ENCODE measurements at regions of chr7 and their contacts with region 1.

Region 1: GRCh38 chr7:3592401-3593135 is 291.5 kb downstream of the SDK1 start:
- DNase-seq: peak; percentile 41
- ATAC-seq: peak; percentile 92
- H3K4me3 ChIP-seq: peak overlapping the region; percentile 34 to 60
- H3K27ac ChIP-seq: peak overlapping the region; percentile 98
- H3K4me1 ChIP-seq: peaks cover 57% of the 10 kb centered on the region
- H3K27me3 ChIP-seq: no peaks in the 10 kb centered on the region
- CTCF ChIP-seq: peak; percentile 74

Region 2: GRCh38 chr7:3056234-3057065 is 536.1 kb before region 1 on chr7:
- CTCF ChIA-PET with region 1: no interaction called
- POLR2A ChIA-PET with region 1: no interaction called
- in situ Hi-C with region 1: no loop called
- intact Hi-C with region 1: no loop called
- DNase-seq: no peak
- ATAC-seq: no peak
- H3K4me3 ChIP-seq: no peak overlapping the region
- H3K27ac ChIP-seq: no peak overlapping the region
- H3K4me1 ChIP-seq: peaks cover 4% of the 10 kb centered on the region; the same call in 1 of the 2 replicates
- H3K27me3 ChIP-seq: peaks cover 3% of the 10 kb centered on the region; the same call in 1 of the 2 replicates
- CTCF ChIP-seq: no peak

Region 3: DNA sequence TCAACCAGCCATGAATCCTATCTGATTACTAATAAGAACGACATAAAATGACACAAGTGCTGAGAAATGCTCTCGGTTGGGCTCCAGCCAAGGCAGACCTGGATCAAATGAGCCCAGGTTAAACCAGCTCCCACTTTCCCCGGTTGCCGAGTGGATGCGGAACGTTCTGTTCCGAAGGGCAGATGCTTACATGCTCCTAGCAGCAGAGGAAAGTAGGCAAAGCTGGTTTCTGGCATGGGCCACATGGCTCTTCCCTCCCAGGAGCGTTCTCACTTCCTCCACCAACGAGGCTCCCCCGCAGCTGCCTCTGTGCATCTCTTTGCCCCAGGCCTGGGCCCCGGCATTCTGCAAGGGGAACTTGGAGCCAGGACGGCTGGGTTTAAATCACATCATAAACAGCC is 353.3 kb before region 1 on chr7:
- CTCF ChIA-PET with region 1: interaction called, 13 read pairs
- POLR2A ChIA-PET with region 1: interaction called, 3 read pairs
- in situ Hi-C with region 1: no loop called
- intact Hi-C with region 1: no loop called
- DNase-seq: no peak
- ATAC-seq: no peak
- H3K4me3 ChIP-seq: no peak overlapping the region
- H3K27ac ChIP-seq: no peak overlapping the region
- H3K4me1 ChIP-seq: peaks cover 23% of the 10 kb centered on the region
- H3K27me3 ChIP-seq: no peaks in the 10 kb centered on the region
- CTCF ChIP-seq: no peak

Region 4: DNA sequence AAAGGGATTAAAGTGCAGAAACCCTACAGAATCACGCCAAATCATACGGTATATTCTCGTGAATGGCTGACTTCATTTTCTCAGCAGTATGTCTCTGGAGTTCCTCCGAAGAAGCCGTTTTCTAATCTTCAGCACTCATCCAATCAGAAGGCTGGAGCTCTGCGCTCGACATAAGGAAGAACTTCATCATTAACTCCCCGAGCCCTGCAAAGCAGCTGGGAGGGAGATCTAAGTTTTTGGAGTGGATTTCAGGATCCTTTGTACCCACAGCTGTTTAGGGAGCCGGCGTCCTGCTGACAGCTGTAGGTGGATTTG is 332.2 kb before region 1 on chr7:
- CTCF ChIA-PET with region 1: no interaction called
- POLR2A ChIA-PET with region 1: interaction called, 13 read pairs
- in situ Hi-C with region 1: no loop called
- intact Hi-C with region 1: no loop called
- DNase-seq: no peak
- ATAC-seq: peak; percentile 74
- H3K4me3 ChIP-seq: peak overlapping the region; percentile 41 to 66
- H3K27ac ChIP-seq: peak overlapping the region; percentile 80
- H3K4me1 ChIP-seq: peaks cover 43% of the 10 kb centered on the region
- H3K27me3 ChIP-seq: no peaks in the 10 kb centered on the region
- CTCF ChIP-seq: no peak

Region 5: GRCh38 chr7:3575753-3576531 is 16.6 kb before region 1 on chr7:
- CTCF ChIA-PET with region 1: interaction called, 3 read pairs
- POLR2A ChIA-PET with region 1: interaction called, 12 read pairs
- in situ Hi-C with region 1: no loop called
- intact Hi-C with region 1: no loop called
- DNase-seq: no peak
- ATAC-seq: no peak
- H3K4me3 ChIP-seq: no peak overlapping the region
- H3K27ac ChIP-seq: no peak overlapping the region; the same call in 1 of the 2 replicates
- H3K4me1 ChIP-seq: peaks cover 5% of the 10 kb centered on the region; the same call in 1 of the 2 replicates
- H3K27me3 ChIP-seq: no peaks in the 10 kb centered on the region
- CTCF ChIP-seq: no peak

Region 6: DNA sequence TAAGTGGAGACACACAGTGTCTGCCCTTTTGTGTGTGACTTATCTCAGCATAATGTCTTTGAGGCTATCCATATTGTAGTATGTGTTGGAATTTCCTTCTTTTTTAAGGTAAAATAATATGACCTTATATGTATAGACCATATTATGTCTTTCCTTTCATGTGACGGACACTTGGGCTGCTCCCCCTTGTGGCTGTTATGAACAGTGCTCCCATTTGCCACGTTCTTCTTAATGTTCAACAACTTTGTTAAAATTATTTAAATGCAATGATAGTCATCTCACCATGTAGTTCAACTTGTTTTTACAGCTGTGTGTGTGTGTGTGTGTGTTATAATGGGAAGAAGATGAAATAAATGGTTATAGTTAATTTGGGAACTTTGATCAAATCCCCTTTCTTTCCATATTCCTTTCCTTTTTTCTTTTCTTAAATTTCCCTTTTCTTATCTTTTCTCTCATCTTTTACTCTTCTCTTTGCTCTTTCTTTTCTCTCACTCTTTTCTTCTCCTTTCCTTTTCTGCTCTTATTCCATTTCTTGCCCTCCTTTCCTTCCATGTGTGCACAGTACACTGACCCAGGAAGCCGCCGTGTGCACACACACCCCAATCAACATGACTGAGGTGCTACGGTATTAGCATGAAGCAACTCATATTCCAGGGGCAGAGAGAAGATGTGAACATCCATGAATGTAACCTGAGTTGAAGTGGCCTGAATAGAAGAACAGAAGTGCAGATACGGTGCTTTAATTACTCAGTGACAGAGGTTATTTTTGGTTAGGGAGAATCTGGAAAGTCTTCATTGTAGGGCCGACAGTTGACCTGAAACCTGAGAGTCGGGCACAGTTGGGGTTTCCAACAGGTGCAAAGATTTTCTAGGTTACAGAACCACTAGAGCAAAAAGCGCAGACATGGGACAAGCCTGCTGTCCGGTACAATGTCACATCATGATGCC is 305.1 kb after region 1 on chr7:
- CTCF ChIA-PET with region 1: no interaction called
- POLR2A ChIA-PET with region 1: interaction called, 11 read pairs
- in situ Hi-C with region 1: no loop called
- intact Hi-C with region 1: no loop called
- DNase-seq: peak; percentile 35
- ATAC-seq: 0 out of 2 replicates have a peak, but pooled peaks have one; percentile 69
- H3K4me3 ChIP-seq: no peak overlapping the region
- H3K27ac ChIP-seq: peak overlapping the region; percentile 58
- H3K4me1 ChIP-seq: peaks cover 3% of the 10 kb centered on the region; the same call in 1 of the 2 replicates
- H3K27me3 ChIP-seq: no peaks in the 10 kb centered on the region
- CTCF ChIP-seq: peak; percentile 89